BJ (cell line): ENCODE measurements at regions of chr11 and their contacts with region 1.

Region 1: DNA sequence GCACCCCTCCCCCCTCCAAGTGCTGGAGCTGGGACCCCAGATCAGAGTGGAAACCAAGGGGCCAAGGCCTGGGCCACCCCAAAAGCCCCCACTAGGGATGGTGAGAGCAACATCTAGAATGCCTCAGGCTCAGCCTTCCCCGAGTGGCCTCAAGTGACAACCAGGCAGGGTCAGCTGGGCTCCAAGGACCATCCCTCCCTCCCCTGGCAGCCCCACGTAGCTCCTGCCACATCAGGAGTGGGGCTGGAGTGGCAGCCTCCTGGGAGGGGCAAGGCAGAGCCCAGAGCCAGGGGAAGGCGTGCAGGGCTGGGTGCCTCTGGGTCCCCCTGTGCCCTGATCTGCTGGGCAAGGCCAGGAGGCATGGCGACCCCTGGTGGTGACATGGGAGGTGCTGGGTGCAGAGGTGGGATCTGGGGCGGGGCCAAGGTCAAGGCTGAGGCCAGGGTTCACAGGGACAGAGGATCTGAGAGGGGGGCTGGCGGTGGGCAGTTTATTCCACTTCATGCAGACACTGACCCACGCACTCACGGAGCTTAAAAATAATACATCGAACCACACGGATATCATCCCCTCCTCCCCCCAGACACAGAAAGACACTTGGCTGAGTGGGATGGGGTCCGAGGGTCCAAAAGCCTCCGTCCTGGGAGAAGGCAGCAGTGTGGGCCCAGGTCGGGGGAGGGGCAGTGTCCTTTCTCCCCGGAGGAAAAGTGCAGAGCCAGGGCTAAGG is 15.8 kb upstream of the EHD1 start:
- DNase-seq: no peak
- H3K4me3 ChIP-seq: no peak overlapping the region
- H3K27me3 ChIP-seq: no peaks in the 10 kb centered on the region
- CTCF ChIP-seq: peak; percentile 94

Region 2: GRCh38 chr11:64834723-64835620 is 59.3 kb before region 1 on chr11:
- CTCF ChIA-PET with region 1: interaction called, 14 read pairs
- POLR2A ChIA-PET with region 1: no interaction called
- DNase-seq: no peak
- H3K4me3 ChIP-seq: no peak overlapping the region
- H3K27me3 ChIP-seq: no peaks in the 10 kb centered on the region; the same call in 1 of the 2 replicates
- CTCF ChIP-seq: no peak

Region 3: DNA sequence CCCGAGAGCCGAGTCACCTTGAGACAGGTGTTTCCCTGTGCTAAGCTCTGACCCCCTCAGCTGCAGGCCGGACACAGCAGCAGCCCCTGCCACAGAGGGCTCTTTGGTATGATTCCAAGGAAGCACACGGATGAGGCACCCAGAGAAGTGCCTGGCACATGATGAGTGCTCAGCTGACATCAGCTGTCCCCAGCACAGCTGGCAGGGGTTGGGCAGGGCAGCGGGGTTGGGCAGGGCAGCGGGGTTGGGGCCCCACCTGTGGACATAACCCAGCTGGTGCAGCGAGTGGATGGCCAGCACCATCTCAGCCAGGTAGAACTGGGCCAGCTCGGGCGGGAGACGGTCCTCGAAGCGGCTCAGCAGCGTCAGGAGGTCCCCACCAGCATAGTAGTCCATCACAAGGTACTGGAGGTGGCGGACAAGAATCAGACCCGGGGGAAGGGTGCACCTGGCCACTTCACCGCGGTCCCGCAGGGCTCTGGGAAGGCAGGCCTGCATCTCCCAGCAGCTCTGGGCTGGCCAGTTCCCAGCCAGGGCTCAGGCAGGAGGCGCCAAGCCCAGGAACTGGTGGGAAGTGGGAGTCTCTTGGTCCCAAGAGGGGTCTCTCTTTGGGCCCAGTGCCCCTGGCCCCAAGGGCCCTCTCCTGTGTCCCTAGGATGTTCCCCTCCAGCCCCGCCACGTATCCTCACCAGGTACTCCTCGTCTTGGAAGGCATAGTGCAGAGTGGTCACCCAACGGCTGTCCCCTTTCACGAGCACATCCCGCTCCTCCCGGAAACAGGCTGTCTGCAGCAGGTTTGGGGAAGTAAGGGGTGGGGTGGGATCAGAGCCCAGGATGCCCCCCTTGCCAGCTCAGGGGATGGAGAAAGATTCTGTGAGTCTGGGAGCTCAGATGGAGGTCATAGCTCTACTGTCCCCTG is 54.1 kb before region 1 on chr11:
- CTCF ChIA-PET with region 1: interaction called, 797 read pairs
- POLR2A ChIA-PET with region 1: no interaction called
- DNase-seq: no peak
- H3K4me3 ChIP-seq: no peak overlapping the region
- H3K27me3 ChIP-seq: no peaks in the 10 kb centered on the region
- CTCF ChIP-seq: no peak

Region 4: DNA sequence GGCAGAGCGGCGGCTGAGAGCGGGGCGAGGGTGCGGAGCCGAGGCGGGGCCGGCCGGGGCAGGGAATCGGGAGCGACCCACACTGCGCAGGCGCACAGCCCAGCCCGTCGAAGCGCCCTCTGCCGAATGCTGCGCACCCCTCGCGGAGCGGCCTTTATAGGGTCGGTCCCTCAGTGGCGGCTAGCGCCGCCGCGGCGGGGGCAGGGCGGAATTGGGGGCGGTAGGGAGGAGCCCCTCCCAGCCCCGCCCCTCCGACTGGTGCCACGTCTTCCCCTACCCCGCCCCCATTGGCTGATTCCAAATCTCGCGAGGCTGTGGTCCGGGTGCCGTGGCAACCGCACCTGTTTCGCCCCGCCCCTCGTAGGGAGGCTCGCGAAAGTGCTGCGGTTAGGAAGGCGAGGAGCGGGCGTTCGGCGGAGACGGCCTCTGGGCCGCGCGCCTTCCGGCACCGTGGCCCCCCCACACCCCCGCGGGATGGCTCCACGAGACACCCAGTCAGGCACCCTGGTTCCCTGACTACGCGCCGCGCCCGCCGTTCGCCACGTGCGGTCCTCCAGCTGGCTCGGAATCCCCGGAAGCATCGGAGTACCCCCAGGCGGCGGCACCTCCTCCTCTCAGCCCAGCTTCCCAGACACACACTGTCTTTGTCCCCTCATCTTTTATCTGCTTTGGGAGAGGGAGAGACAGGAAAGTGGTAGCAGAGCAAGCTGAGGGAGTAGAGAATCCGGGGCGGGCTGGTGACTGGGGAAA is 15.6 kb before region 1 on chr11 and contains the start of gene EHD1:
- CTCF ChIA-PET with region 1: interaction called, 32 read pairs
- POLR2A ChIA-PET with region 1: no interaction called
- DNase-seq: peak; percentile 77
- H3K4me3 ChIP-seq: peak within 1 kb of the TSS; percentile 77
- H3K27me3 ChIP-seq: no peaks in the 10 kb centered on the region
- CTCF ChIP-seq: peak; percentile 71
- polyA plus RNA-seq, gene EHD1: 95.3 and 191 TPM in 2 replicates